Astrocyte of the cerebellum (primary cell): ENCODE measurements at regions of chr6 and their contacts with region 1.

Region 1: GRCh38 chr6:45830441-45831139 is 185.1 kb downstream of the CLIC5 start:
- DNase-seq: no peak
- H3K4me3 ChIP-seq: no peak overlapping the region
- CTCF ChIP-seq: no peak

Region 2: GRCh38 chr6:45772886-45773495 is 57.6 kb before region 1 on chr6:
- in situ Hi-C with region 1: loop called (anchors 5 kb)
- DNase-seq: no peak
- H3K4me3 ChIP-seq: no peak overlapping the region
- CTCF ChIP-seq: no peak